PC-3 (cell line): ENCODE measurements at regions of chr1 and their contacts with region 1.

Region 1: DNA sequence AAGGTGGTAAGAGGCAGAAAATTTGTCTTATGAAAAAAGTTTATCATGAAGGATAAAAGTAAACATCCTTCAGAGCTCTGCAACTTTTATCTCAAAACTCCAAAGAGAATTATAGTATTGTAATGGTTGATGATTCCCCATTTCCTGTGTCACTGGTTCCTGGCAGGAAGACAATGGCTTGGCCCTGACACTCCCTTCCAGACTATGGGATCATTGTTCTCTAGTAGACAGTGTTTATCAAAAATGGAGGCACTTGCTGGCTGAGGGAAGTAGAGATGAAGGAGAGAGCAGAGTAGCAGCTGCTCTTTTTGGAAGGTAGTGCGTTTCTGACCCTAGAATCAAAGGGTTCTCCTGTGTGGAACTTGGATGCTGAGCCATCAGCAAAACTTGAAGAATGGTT is 145.9 kb upstream of the ATP1B1 start:
- DNase-seq: peak; percentile 44
- ATAC-seq: peak; percentile 83
- H3K4me3 ChIP-seq: no peak overlapping the region
- H3K27ac ChIP-seq: 0 out of 2 replicates have a peak overlapping the region, but pooled peaks have one; percentile 1
- H3K4me1 ChIP-seq: peaks cover 9% of the 10 kb centered on the region
- H3K27me3 ChIP-seq: no peaks in the 10 kb centered on the region
- CTCF ChIP-seq: no peak

Region 2: GRCh38 chr1:168921629-168922028 is 39.0 kb before region 1 on chr1:
- CTCF ChIA-PET with region 1: no interaction called
- POLR2A ChIA-PET with region 1: no interaction called
- intact Hi-C with region 1: no loop called
- DNase-seq: no peak
- ATAC-seq: no peak
- H3K4me3 ChIP-seq: 0 out of 2 replicates have a peak overlapping the region, but pooled peaks have one; percentile 29
- H3K27ac ChIP-seq: peak overlapping the region; percentile 99
- H3K4me1 ChIP-seq: peaks cover 60% of the 10 kb centered on the region
- H3K27me3 ChIP-seq: no peaks in the 10 kb centered on the region
- CTCF ChIP-seq: no peak

Region 3: DNA sequence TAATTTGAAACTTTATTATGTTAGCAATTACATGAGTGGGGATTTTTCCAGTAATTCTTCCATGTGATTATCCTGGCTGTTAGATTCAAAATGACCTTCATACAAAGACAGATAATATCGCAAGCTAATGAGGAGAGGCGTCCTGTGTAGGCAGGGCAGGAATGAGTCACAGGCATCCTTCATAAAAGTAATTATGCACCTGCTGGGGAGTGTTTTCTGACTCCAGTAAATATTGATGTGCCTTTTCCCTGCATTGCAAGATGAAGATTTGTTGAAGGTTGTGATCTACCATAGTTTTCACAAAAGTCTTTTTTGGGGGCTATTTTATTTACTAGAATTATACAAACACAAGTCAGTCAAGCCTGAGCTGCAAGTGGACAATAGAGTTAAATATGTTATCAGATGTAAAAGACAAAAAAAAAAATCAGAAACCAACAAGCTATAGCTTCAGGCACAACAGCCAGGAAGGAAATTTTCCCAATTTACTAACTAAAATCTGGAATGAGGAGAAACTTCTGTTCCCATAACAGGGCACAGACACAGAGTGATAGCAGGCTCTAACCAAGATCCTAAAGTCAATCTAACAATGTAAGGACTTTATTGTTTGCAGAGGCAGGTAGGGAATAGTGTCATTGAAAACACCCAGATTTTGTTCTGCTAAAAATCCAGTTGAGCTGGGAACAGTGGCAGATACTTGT is 20.9 kb before region 1 on chr1:
- CTCF ChIA-PET with region 1: no interaction called
- POLR2A ChIA-PET with region 1: interaction called, 31 read pairs
- intact Hi-C with region 1: no loop called
- DNase-seq: peak; percentile 16
- ATAC-seq: peak; percentile 67
- H3K4me3 ChIP-seq: no peak overlapping the region
- H3K27ac ChIP-seq: no peak overlapping the region
- H3K4me1 ChIP-seq: 0 out of 2 replicates have a peak, but pooled peaks cover 3% of the 10 kb centered on the region
- H3K27me3 ChIP-seq: no peaks in the 10 kb centered on the region
- CTCF ChIP-seq: no peak